CD4-positive, alpha-beta memory T cell (primary cell): ENCODE measurements at regions of chr1 and their contacts with region 1.

Region 1: DNA sequence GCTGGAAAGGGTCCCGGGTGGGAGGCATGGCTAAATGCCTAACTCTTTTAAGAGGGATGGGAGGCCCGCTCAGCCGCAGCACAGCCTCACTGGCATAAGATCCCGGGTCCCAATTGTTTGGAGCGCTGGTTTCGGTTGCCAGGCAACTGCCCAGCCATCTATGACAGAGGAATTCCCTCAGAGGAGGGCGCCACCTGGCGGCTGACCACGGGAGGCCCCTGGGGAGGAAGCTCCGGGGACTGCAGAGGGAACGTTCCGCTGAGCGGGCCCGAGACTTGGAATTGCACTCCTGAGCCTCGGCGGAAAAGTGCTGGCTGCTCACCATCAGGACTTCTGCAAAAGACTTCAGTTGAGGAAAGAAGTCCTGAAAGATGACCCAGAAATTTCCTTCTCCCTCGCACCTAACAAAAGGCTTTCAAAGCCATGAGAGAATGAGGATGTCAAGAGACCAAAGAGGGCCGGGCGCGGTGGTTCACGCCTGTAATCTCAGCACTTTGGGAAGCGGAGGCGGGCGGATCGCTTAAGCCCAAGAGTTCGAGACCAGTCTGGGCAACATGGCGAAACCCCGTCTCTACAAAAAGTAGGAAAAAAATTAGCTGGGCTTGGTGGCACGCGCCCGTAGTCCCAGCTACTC is 1.1 kb upstream of the ELAPOR1 start:
- DNase-seq: peak; percentile 86 to 89 (median 87)
- H3K4me3 ChIP-seq: peak overlapping the region in 1 of 2 donors; percentile 64
- H3K4me3 Mint-ChIP-seq: peak overlapping the region; percentile 86 to 94 (median 90)
- H3K27ac ChIP-seq: peak overlapping the region; percentile 61
- H3K27ac Mint-ChIP-seq: peak overlapping the region; percentile 94 to 99 (median 98)
- H3K4me1 ChIP-seq: peaks cover 24% of the 10 kb centered on the region
- H3K4me1 Mint-ChIP-seq: peaks cover 23 to 35% (median 28%) of the 10 kb centered on the region in 4 donors
- H3K27me3 ChIP-seq: no peaks in the 10 kb centered on the region
- H3K27me3 Mint-ChIP-seq: peaks cover 0 to 2% of the 10 kb centered on the region in 2 donors

Region 2: DNA sequence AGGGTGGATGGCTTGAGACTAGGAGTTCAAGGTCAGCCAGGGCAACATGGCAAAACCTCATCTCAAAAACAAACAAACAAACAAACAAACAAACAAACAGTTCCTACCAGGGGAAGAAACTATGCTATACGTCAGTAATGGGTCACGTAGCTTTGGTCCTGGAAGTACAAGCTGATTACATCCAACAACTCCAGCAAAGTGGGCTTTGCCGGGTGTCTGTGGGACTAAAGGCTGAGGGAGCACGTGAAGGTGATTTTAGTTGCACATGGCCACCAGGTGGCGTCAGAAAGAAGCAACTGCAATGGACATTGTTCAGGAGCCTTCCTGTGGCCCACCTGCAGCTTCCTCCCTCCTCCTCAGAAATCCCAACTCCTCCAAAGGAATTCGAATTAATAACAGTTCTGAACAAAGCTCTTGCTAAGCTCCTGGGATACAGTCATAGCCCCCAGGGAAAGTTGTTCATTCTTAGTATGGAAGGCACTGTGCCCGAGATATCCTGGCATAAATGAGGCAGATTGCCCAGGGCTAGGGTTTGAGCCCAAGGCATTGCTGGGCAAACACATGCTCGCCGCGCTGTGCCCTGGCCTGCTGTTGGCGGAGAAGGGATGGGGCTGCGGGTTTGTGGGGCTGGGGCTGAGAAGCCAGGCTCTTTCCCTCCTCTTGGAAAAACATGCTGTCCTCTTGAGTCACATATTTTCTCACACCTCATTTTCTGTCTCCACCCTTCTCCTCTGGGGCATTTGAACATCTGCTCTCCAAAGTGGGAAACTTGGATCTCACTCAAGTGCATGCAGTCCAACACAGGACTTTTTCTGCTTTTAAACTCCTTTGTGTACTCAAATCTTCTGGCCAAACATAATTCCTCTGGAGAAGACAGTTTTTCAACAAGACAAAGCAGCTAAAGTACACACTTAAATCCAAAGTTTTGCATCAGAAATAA is 284.5 kb before region 1 on chr1:
- CTCF ChIA-PET with region 1: interaction called, 54 read pairs
- POLR2A ChIA-PET with region 1: no interaction called
- intact Hi-C with region 1: no loop called
- DNase-seq: peak; percentile 38 to 59 (median 57)
- H3K4me3 ChIP-seq: no peak overlapping the region
- H3K4me3 Mint-ChIP-seq: no peak overlapping the region
- H3K27ac ChIP-seq: no peak overlapping the region
- H3K27ac Mint-ChIP-seq: no peak overlapping the region
- H3K4me1 ChIP-seq: peaks cover 8% of the 10 kb centered on the region
- H3K4me1 Mint-ChIP-seq: peaks cover 0 to 10% (median 7%) of the 10 kb centered on the region in 4 donors
- H3K27me3 ChIP-seq: no peaks in the 10 kb centered on the region
- H3K27me3 Mint-ChIP-seq: peaks cover 2 to 3% of the 10 kb centered on the region in 2 donors

Region 3: GRCh38 chr1:109027841-109028240 is 84.9 kb before region 1 on chr1:
- CTCF ChIA-PET with region 1: interaction called, 17 read pairs
- POLR2A ChIA-PET with region 1: no interaction called
- intact Hi-C with region 1: loop called (anchors 1 kb)
- DNase-seq: no peak
- H3K4me3 ChIP-seq: no peak overlapping the region
- H3K4me3 Mint-ChIP-seq: no peak overlapping the region
- H3K27ac ChIP-seq: no peak overlapping the region
- H3K27ac Mint-ChIP-seq: peak overlapping the region in 1 of 7 donors; percentile 7
- H3K4me1 ChIP-seq: no peaks in the 10 kb centered on the region
- H3K4me1 Mint-ChIP-seq: peaks cover 0 to 4% (median 2%) of the 10 kb centered on the region in 4 donors
- H3K27me3 ChIP-seq: no peaks in the 10 kb centered on the region
- H3K27me3 Mint-ChIP-seq: no peaks in the 10 kb centered on the region

Region 4: DNA sequence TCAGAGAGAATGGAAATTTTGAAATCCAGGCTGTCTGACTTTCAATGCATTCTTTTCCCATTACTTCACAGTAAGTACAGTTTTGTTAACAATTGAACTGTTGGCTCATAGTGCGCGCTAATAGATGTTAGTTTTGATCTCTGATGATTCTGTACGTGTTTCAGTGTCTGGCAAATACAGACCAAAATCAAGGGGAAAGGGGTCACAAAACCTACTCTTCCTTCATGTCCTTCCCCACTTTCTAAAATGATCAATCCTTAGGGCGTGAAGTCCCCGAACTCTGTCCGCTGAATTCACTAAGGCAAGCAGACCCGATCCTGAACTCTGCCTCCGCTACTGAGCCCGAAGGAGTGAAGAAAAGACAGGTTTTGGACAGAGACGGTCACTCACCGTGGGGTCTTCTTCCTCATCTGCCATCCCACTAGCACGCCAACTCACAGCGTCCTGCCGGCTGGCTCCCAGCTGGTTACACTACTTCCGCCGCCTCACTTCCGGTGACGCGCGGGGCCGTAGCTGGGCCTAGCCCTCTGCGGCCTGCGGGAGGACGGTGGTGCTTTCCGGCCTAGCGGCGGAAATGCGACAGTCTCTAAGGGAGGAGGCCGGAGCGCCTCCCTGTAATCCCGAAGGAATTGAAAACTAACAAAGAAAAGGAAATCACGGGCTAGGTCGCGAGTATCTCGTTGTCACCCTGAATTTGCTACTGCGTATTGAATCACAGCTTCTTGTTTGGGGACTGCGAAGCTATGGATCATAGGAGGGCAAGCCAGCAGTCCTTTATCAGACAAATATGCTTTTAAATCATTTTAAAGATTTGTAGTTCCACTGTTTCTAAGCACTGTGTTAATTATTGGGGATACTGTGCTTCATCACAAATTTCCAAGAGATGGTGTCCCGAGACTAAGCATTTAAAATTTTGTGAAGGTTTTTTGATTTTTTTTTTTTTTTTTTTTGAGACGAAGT is 37.0 kb before region 1 on chr1 and contains the start of gene TAF13:
- CTCF ChIA-PET with region 1: interaction called, 7 read pairs
- POLR2A ChIA-PET with region 1: interaction called, 17 read pairs
- intact Hi-C with region 1: loop called (anchors 2 kb)
- DNase-seq: peak; percentile 82 to 88 (median 85)
- H3K4me3 ChIP-seq: peak within 1 kb of the TSS; percentile 95 to 99
- H3K4me3 Mint-ChIP-seq: peak within 1 kb of the TSS; percentile 95 to 100 (median 96)
- H3K27ac ChIP-seq: peak within 1 kb of the TSS; percentile 93
- H3K27ac Mint-ChIP-seq: peak within 1 kb of the TSS; percentile 99 to 100 (median 99)
- H3K4me1 ChIP-seq: peaks cover 17% of the 10 kb centered on the region
- H3K4me1 Mint-ChIP-seq: peaks cover 7 to 23% (median 17%) of the 10 kb centered on the region in 4 donors
- H3K27me3 ChIP-seq: no peaks in the 10 kb centered on the region
- H3K27me3 Mint-ChIP-seq: no peaks in the 10 kb centered on the region
- total RNA-seq, gene TAF13: 12.5 to 14.6 TPM

Region 5: DNA sequence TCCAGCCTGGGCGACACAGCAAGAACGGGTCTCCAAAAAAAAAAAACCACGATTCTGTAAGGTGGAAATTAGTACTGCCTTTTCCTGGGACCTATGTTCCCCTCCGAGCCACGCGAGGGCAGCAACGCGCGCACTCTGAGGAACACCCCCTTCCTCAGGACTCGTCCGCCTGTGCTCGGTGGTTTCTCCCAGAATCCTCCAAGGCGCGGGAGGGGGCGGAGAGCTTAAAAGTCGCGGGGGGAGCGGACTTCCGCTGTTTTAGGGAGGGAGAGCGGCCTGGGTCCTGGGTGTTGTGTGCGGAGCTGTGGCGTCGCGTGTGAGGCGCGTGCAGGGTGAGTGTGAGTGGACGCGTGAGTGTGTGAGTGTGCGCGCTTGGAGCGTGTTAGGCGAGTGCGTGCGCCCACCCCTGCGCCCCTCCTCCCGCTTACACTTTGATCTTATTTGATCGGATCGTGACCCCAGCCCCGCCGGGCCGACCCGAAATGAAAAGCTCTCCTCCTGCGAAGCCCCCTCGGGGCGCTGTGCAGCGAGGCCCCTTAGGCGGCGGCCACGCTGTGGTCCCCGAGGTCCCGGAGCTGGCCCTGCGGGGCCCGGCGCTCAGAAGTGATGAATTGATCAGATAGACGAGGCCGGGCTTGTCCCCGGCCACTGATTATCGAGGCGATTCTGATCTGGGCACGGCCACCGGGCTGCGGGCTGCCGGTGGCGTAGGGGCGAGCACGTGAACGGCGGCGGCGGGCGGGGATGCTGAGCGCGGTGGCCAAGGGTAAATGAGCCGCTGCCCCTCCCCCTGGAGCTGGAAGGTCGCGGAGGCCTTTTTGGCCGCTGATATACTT is 12.6 kb before region 1 on chr1:
- CTCF ChIA-PET with region 1: interaction called, 150 read pairs
- POLR2A ChIA-PET with region 1: interaction called, 171 read pairs
- intact Hi-C with region 1: loop called (anchors 1 kb)
- DNase-seq: peak; percentile 96 to 98 (median 97)
- H3K4me3 ChIP-seq: peak overlapping the region; percentile 80 to 81
- H3K4me3 Mint-ChIP-seq: peak overlapping the region; percentile 91 to 100 (median 96)
- H3K27ac ChIP-seq: peak overlapping the region; percentile 80
- H3K27ac Mint-ChIP-seq: peak overlapping the region; percentile 90 to 99 (median 98)
- H3K4me1 ChIP-seq: peaks cover 15% of the 10 kb centered on the region
- H3K4me1 Mint-ChIP-seq: peaks cover 7 to 20% (median 16%) of the 10 kb centered on the region in 4 donors
- H3K27me3 ChIP-seq: no peaks in the 10 kb centered on the region
- H3K27me3 Mint-ChIP-seq: no peaks in the 10 kb centered on the region

Region 6: GRCh38 chr1:109142260-109142659 is 29.5 kb after region 1 on chr1:
- CTCF ChIA-PET with region 1: no interaction called
- POLR2A ChIA-PET with region 1: no interaction called
- intact Hi-C with region 1: no loop called
- DNase-seq: no peak
- H3K4me3 ChIP-seq: no peak overlapping the region
- H3K4me3 Mint-ChIP-seq: no peak overlapping the region
- H3K27ac ChIP-seq: no peak overlapping the region
- H3K27ac Mint-ChIP-seq: no peak overlapping the region
- H3K4me1 ChIP-seq: no peaks in the 10 kb centered on the region
- H3K4me1 Mint-ChIP-seq: peaks cover 0 to 2% (median 0%) of the 10 kb centered on the region in 4 donors
- H3K27me3 ChIP-seq: no peaks in the 10 kb centered on the region
- H3K27me3 Mint-ChIP-seq: no peaks in the 10 kb centered on the region

Region 7: DNA sequence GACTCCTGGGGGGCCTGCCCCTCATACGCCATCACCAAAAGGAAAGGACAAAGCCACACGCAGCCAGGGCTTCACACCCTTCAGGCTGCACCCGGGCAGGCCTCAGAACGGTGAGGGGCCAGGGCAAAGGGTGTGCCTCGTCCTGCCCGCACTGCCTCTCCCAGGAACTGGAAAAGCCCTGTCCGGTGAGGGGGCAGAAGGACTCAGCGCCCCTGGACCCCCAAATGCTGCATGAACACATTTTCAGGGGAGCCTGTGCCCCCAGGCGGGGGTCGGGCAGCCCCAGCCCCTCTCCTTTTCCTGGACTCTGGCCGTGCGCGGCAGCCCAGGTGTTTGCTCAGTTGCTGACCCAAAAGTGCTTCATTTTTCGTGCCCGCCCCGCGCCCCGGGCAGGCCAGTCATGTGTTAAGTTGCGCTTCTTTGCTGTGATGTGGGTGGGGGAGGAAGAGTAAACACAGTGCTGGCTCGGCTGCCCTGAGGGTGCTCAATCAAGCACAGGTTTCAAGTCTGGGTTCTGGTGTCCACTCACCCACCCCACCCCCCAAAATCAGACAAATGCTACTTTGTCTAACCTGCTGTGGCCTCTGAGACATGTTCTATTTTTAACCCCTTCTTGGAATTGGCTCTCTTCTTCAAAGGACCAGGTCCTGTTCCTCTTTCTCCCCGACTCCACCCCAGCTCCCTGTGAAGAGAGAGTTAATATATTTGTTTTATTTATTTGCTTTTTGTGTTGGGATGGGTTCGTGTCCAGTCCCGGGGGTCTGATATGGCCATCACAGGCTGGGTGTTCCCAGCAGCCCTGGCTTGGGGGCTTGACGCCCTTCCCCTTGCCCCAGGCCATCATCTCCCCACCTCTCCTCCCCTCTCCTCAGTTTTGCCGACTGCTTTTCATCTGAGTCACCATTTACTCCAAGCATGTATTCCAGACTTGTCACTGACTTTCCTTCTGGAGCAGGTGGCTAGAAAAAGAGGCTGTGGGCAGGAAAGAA is 162.0 kb after region 1 on chr1:
- CTCF ChIA-PET with region 1: no interaction called
- POLR2A ChIA-PET with region 1: no interaction called
- intact Hi-C with region 1: no loop called
- DNase-seq: no peak
- H3K4me3 ChIP-seq: no peak overlapping the region
- H3K4me3 Mint-ChIP-seq: no peak overlapping the region
- H3K27ac ChIP-seq: no peak overlapping the region
- H3K27ac Mint-ChIP-seq: no peak overlapping the region
- H3K4me1 ChIP-seq: peaks cover 4% of the 10 kb centered on the region
- H3K4me1 Mint-ChIP-seq: peaks cover 0 to 5% (median 0%) of the 10 kb centered on the region in 4 donors
- H3K27me3 ChIP-seq: no peaks in the 10 kb centered on the region
- H3K27me3 Mint-ChIP-seq: no peaks in the 10 kb centered on the region

Region 8: GRCh38 chr1:109426278-109427170 is 313.8 kb after region 1 on chr1 and contains the start of gene PSMA5:
- CTCF ChIA-PET with region 1: no interaction called
- POLR2A ChIA-PET with region 1: interaction called, 4 read pairs
- intact Hi-C with region 1: loop called (anchors 2 kb)
- DNase-seq: peak; percentile 93 to 99 (median 96)
- H3K4me3 ChIP-seq: peak within 1 kb of the TSS; percentile 96 to 98
- H3K4me3 Mint-ChIP-seq: peak within 1 kb of the TSS; percentile 94 to 99 (median 98)
- H3K27ac ChIP-seq: peak within 1 kb of the TSS; percentile 87
- H3K27ac Mint-ChIP-seq: peak within 1 kb of the TSS; percentile 90 to 99 (median 98)
- H3K4me1 ChIP-seq: peaks cover 44% of the 10 kb centered on the region
- H3K4me1 Mint-ChIP-seq: peaks cover 22 to 50% (median 37%) of the 10 kb centered on the region in 4 donors
- H3K27me3 ChIP-seq: no peaks in the 10 kb centered on the region
- H3K27me3 Mint-ChIP-seq: no peaks in the 10 kb centered on the region
- total RNA-seq, gene PSMA5: 87.7 to 90.2 TPM